T-cell (primary cell): ENCODE measurements at regions of chr1 and their contacts with region 1.

Region 1: GRCh38 chr1:9455487-9456234 is 83.6 kb upstream of the SLC25A33 start:
- DNase-seq: peak; percentile 12 to 81 (median 55)
- ATAC-seq: peak; percentile 61 to 89 (median 67)
- H3K4me3 ChIP-seq: no peak overlapping the region
- H3K4me3 Mint-ChIP-seq: no peak overlapping the region
- H3K27ac ChIP-seq: no peak overlapping the region
- H3K27ac Mint-ChIP-seq: no peak overlapping the region
- H3K4me1 ChIP-seq: peaks cover 0 to 2% of the 10 kb centered on the region in 2 experiments
- H3K4me1 Mint-ChIP-seq: peaks cover 0 to 4% (median 0%) of the 10 kb centered on the region in 3 donors
- H3K27me3 ChIP-seq: peaks cover 0 to 27% of the 10 kb centered on the region in 2 experiments
- H3K27me3 Mint-ChIP-seq: peaks cover 0 to 6% of the 10 kb centered on the region in 2 donors

Region 2: DNA sequence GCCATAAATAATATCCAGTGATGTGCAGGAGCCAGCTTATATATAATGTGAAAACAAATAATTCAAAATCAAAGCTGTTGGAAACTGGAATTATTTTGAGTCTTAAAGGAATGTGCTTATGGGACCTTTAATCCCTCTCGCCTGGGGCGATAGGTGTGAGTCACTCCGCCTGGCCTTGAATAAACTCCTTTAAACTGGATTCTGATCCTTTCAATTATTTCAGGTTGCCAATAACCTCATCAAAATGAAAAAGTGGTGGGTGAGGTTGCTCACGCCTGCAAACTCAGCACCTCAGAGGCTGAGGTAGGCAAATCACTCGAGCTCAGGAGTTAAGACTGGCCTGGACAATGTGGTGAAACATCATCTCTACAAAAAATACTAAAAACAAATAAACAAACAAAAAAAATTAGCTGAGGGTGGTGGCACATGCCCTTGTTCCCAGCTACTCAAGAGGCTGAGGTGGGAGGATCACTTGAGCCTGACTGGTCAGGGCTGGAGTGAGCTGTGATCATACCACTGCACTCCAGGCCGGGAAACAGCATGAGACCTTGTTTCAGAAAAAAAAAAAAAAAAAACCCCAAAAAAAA is 374.9 kb before region 1 on chr1:
- CTCF ChIA-PET with region 1: interaction called in 1 of 2 experiments, 10 read pairs
- POLR2A ChIA-PET with region 1: no interaction called
- DNase-seq: no peak
- ATAC-seq: no peak
- H3K4me3 ChIP-seq: no peak overlapping the region
- H3K4me3 Mint-ChIP-seq: no peak overlapping the region
- H3K27ac ChIP-seq: no peak overlapping the region
- H3K27ac Mint-ChIP-seq: no peak overlapping the region
- H3K4me1 ChIP-seq: peaks cover 8 to 12% of the 10 kb centered on the region in 2 experiments
- H3K4me1 Mint-ChIP-seq: peaks cover 25 to 41% (median 40%) of the 10 kb centered on the region in 3 donors
- H3K27me3 ChIP-seq: peaks cover 0 to 17% of the 10 kb centered on the region in 2 experiments
- H3K27me3 Mint-ChIP-seq: peaks cover 11 to 28% of the 10 kb centered on the region in 2 donors

Region 3: GRCh38 chr1:9289090-9289534 is 166.5 kb before region 1 on chr1:
- CTCF ChIA-PET with region 1: interaction called, 13 to 44 read pairs
- POLR2A ChIA-PET with region 1: no interaction called
- DNase-seq: peak; percentile 43 to 90 (median 78)
- ATAC-seq: no peak
- H3K4me3 ChIP-seq: no peak overlapping the region
- H3K4me3 Mint-ChIP-seq: no peak overlapping the region
- H3K27ac ChIP-seq: no peak overlapping the region
- H3K27ac Mint-ChIP-seq: no peak overlapping the region
- H3K4me1 ChIP-seq: peaks cover 9 to 16% of the 10 kb centered on the region in 2 experiments
- H3K4me1 Mint-ChIP-seq: peaks cover 20 to 37% (median 21%) of the 10 kb centered on the region in 3 donors
- H3K27me3 ChIP-seq: peaks cover 0 to under 1% of the 10 kb centered on the region in 2 experiments
- H3K27me3 Mint-ChIP-seq: no peaks in the 10 kb centered on the region

Region 4: DNA sequence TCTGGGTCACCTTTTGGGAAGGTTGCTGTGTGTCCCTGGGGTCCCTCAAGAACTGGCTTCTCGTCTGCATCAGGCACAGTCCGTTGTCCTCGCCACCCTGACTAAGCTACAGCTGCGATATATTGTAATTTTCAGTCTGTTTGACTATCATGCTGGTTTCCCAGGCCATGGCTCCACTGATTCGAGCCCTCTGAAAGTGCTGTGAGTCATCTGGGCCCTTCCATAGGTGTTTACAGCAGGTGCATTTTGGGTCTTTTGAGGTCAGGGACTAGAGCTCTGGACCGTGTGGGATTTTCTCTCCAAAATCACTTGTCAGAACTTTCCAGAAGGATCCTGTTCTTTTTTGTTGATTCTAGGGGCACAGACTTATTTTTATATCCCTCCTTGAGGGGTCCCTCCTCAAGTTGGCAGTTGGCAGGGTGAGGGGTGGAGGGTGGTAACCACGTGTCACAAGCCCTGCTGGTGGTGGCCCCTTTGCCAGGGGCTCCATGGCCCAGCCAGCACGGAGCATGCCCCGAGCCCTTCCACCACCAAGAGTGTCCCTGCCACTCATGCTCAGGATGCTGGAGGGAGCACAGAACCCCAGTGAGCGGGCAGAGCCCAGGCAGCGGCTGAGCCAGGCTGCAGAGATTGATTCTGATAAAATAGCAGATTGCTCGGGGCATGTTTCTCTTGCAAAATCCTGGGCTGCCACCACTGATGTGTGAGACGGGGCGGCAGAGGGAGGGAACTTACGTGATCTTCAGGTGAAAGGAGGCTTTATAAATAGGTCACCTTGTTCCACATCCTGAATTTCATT is 110.0 kb before region 1 on chr1:
- CTCF ChIA-PET with region 1: interaction called in 1 of 2 experiments, 10 read pairs
- POLR2A ChIA-PET with region 1: no interaction called
- DNase-seq: no peak
- ATAC-seq: no peak
- H3K4me3 ChIP-seq: no peak overlapping the region
- H3K4me3 Mint-ChIP-seq: no peak overlapping the region
- H3K27ac ChIP-seq: no peak overlapping the region
- H3K27ac Mint-ChIP-seq: no peak overlapping the region
- H3K4me1 ChIP-seq: no peaks in the 10 kb centered on the region
- H3K4me1 Mint-ChIP-seq: peaks cover 0 to 3% (median 2%) of the 10 kb centered on the region in 3 donors
- H3K27me3 ChIP-seq: peaks cover 0 to 2% of the 10 kb centered on the region in 2 experiments
- H3K27me3 Mint-ChIP-seq: no peaks in the 10 kb centered on the region

Region 5: GRCh38 chr1:9444532-9444931 is 11.1 kb before region 1 on chr1:
- CTCF ChIA-PET with region 1: no interaction called
- POLR2A ChIA-PET with region 1: no interaction called
- DNase-seq: no peak
- ATAC-seq: no peak
- H3K4me3 ChIP-seq: no peak overlapping the region
- H3K4me3 Mint-ChIP-seq: no peak overlapping the region
- H3K27ac ChIP-seq: no peak overlapping the region
- H3K27ac Mint-ChIP-seq: no peak overlapping the region
- H3K4me1 ChIP-seq: no peaks in the 10 kb centered on the region
- H3K4me1 Mint-ChIP-seq: no peaks in the 10 kb centered on the region
- H3K27me3 ChIP-seq: peaks cover 0 to 37% of the 10 kb centered on the region in 2 experiments
- H3K27me3 Mint-ChIP-seq: peaks cover 0 to 12% of the 10 kb centered on the region in 2 donors